Right ventricle myocardium inferior (tissue), 1 donor: ENCODE measurements at regions of chr3 and their contacts with region 1.

Region 1: GRCh38 chr3:133573054-133573628 is 345 bp upstream of the CDV3 start:
- DNase-seq: peak; percentile 100
- ATAC-seq: peak; percentile 97

Region 2: DNA sequence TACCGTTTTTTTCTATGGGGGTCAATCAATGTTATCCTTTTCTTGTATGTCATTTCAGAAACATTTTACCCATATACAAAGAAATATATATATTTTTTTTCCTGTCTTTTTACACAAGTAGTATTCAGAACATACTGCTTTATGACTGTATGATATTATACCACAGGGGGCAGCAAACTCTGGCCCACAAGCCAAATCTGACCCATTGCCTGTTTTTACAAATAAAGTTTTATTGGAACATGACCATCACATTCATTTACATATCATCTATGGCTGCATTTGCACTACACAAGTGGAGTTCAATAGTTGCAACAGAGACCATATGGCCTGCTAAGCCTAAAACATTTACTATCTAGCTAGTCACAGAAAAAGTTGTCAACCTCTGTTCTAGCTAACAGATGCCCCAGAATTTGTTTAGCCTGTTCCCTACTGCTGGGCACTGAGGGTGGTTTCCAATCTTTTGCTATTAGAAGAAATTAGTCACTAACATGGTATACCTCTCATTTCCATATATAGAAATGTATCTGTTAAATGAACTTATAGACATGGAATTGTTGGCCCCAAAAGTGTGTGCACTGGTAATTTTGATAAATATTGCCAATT is 115.6 kb before region 1 on chr3:
- intact Hi-C with region 1: no loop called
- DNase-seq: no peak
- ATAC-seq: no peak

Region 3: DNA sequence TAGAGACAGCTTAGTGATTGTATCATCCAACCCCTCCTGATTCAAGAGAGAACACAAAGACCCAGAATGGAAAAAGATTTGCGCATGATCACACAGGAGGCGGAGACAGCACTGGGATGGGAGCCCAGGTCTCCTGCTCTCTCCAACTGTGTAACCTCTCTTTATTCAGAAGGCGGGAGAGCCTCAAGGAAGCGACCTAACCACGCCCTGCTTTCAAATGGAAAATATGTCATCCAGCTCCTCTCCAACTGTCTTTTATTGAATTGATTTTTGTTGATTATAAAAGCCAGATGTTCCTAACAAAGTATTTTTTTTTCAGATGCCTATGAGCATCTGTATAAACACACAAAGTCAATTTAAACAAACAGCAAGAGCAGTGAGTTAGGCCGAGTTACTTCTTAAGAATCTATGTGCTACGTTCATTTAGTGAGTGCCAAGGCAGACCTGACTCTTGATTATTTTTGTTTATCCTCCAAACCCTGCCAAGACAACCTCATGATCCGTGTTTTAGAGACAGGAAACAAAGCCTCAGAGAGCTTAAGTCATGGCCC is 98.8 kb before region 1 on chr3:
- intact Hi-C with region 1: loop called (anchors 5 kb)
- DNase-seq: peak; percentile 79
- ATAC-seq: peak; percentile 87

Region 4: DNA sequence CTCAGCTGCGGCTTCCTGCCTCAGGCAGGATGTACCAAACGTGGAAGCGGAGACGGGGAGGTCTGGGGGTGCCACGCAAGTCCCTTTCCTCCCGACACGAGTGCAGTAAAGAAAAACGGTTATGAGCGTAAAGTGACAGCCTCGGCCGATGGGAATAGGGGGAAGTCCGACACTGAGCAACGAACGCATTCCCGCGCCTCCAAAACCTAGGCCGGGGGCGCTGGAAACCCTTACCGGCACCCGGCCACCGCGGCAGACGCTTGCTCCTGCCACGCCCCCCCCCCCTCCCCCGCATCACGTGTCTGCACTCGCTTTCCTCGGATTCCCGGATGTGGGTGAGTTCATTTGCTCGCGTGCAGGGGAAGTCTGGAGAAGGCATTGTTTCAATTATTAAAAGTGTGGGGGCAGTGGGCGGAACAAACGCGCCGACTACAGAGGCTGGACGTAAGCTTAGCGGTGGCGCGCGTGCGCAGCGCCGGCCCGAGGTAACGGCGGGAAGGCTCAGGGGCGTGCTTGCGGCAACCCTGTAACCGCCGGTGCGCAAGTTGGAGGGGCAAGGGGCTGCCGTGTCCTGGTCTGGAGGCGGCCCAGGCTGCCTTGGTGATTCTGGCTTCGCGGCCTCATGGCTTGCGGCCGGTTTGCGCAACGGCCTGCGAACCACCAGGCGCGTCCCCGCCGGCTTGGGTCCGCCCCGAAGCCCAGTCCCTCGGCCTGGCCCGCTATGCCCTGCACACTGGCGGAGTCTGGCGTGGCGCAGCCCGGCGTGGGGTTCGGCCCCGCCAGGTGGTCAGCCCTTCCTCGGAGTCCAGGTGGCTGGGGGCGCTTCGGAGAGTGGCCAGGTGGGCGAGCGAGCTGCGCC is 912.8 kb after region 1 on chr3 and contains the starts of genes ANAPC13 and CEP63:
- intact Hi-C with region 1: loop called (anchors 10 kb)
- DNase-seq: peak; percentile 96
- ATAC-seq: peak; percentile 93
- total RNA-seq, gene ANAPC13: 80.5 TPM
- total RNA-seq, gene CEP63: 36.7 TPM